ENCODE measurements at regions of chr1 and their contacts with region 1.

Region 1: GRCh38 chr1:36149237-36149972 is at the start of gene TRAPPC3:
- DNase-seq: peak; percentile 99
- H3K4me3 ChIP-seq: peak within 1 kb of the TSS; percentile 75
- H3K27ac ChIP-seq: peak within 1 kb of the TSS; percentile 99
- H3K27me3 ChIP-seq: no peaks in the 10 kb centered on the region
- CTCF ChIP-seq: peak; percentile 94
- polyA plus RNA-seq, gene TRAPPC3: 88.5 and 92.3 TPM in 2 replicates

Region 2: GRCh38 chr1:35915693-35916092 is 233.7 kb before region 1 on chr1:
- CTCF ChIA-PET with region 1: no interaction called
- POLR2A ChIA-PET with region 1: no interaction called
- DNase-seq: no peak
- H3K4me3 ChIP-seq: no peak overlapping the region
- H3K27ac ChIP-seq: no peak overlapping the region
- H3K27me3 ChIP-seq: no peaks in the 10 kb centered on the region
- CTCF ChIP-seq: no peak

Region 3: DNA sequence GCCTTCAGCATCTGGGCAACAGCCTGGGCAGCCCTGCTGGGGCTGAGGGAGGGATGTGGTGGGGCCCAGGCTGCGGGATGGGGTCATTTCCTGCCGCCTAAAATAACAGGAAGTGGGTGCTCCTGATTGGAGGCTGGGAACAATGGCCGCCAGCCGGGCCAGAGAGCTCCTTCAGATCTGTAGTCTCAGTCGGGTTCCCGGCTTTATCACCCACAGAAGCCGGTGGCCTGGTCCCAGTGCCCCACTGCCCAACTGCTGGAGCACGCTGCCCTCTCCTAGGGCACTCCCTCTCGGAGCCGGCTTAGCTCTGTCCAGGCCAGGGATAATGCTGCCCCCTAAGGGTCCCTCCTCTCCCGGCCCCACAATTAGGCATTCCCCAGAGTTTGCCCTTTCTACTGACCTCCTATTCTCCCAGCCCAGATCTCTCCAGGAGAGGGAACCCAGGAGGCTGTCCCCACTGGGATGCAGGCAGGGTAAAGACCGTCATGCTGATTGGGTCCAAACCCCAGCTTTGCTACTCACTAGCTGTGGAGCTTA is 11.6 kb after region 1 on chr1:
- CTCF ChIA-PET with region 1: interaction called, 19 read pairs
- POLR2A ChIA-PET with region 1: interaction called, 12 read pairs
- DNase-seq: no peak
- H3K4me3 ChIP-seq: peak overlapping the region; percentile 66
- H3K27ac ChIP-seq: peak overlapping the region; percentile 78
- H3K27me3 ChIP-seq: no peaks in the 10 kb centered on the region
- CTCF ChIP-seq: peak; percentile 56

Region 4: GRCh38 chr1:36223993-36224536 is 74.7 kb after region 1 on chr1 and contains the start of gene THRAP3:
- CTCF ChIA-PET with region 1: interaction called, 7 read pairs
- POLR2A ChIA-PET with region 1: interaction called, 17 read pairs
- DNase-seq: peak; percentile 98
- H3K4me3 ChIP-seq: peak within 1 kb of the TSS; percentile 97
- H3K27ac ChIP-seq: peak within 1 kb of the TSS; percentile 94
- H3K27me3 ChIP-seq: no peaks in the 10 kb centered on the region
- CTCF ChIP-seq: no peak
- polyA plus RNA-seq, gene THRAP3: 76.0 and 76.5 TPM in 2 replicates

Region 5: GRCh38 chr1:36285448-36286101 is 136.2 kb after region 1 on chr1:
- CTCF ChIA-PET with region 1: interaction called, 62 read pairs
- POLR2A ChIA-PET with region 1: interaction called, 5 read pairs
- DNase-seq: peak; percentile 81
- H3K4me3 ChIP-seq: no peak overlapping the region
- H3K27ac ChIP-seq: no peak overlapping the region
- H3K27me3 ChIP-seq: no peaks in the 10 kb centered on the region
- CTCF ChIP-seq: peak; percentile 74

Region 6: DNA sequence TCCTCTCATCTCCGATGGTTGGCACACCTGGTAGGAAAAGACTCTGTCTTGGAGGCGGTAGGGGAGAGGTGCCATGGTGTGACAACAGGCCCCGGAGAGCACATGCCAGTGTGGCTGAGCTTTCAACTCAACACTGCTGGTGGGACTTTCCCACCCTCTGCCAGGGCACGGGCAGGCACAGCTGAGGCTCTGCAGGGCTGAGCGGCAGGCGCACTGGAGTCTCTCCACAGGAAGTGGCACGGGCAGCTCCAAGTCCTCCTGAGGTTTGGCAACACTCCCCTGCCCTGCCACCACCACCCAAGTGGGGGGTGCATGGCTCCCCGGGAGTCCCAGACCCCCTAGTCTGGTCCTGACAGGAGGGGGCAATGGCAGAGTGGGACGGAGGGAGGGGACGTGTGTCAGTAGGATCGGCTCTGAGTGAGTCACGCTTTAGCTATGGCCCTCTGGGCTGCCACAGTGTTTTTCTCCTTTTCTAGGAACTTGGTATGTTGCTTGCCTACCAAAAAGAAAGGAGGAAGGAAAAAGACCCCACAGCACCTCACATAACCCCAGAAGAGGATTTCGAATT is 201.3 kb after region 1 on chr1:
- CTCF ChIA-PET with region 1: no interaction called
- POLR2A ChIA-PET with region 1: no interaction called
- DNase-seq: no peak
- H3K4me3 ChIP-seq: no peak overlapping the region
- H3K27ac ChIP-seq: peak overlapping the region; percentile 98
- H3K27me3 ChIP-seq: no peaks in the 10 kb centered on the region
- CTCF ChIP-seq: no peak

Region 7: GRCh38 chr1:36385410-36386257 is 236.2 kb after region 1 on chr1 and contains the start of gene STK40:
- CTCF ChIA-PET with region 1: no interaction called
- POLR2A ChIA-PET with region 1: interaction called, 15 read pairs
- DNase-seq: peak; percentile 99
- H3K4me3 ChIP-seq: peak within 1 kb of the TSS; percentile 92
- H3K27ac ChIP-seq: peak within 1 kb of the TSS; percentile 100
- H3K27me3 ChIP-seq: no peaks in the 10 kb centered on the region
- CTCF ChIP-seq: no peak
- polyA plus RNA-seq, gene STK40: 26.4 and 30.3 TPM in 2 replicates

Region 8: DNA sequence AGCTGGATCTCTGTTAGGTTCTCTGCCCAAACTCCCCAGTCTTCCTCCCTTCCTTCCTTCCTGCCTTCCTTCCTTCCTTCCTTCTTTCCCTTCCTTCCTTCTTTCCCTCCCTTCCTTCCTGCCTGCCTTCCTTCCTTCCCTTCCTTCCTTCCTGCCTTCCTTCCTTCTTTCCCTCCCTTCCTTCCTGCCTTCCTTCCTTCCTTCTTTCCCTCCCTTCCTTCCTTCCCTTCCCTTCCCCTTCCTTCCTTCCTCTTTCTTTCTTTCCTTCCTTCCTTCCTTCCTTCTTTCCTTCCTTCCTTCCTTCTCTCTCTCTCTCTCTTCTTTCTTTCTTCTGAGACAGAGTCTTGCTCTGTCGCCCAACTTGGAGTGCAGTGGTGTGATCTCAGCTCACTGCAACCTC is 257.0 kb after region 1 on chr1:
- CTCF ChIA-PET with region 1: no interaction called
- POLR2A ChIA-PET with region 1: no interaction called
- DNase-seq: no peak
- H3K4me3 ChIP-seq: no peak overlapping the region
- H3K27ac ChIP-seq: no peak overlapping the region
- H3K27me3 ChIP-seq: no peaks in the 10 kb centered on the region
- CTCF ChIP-seq: no peak

Region 9: DNA sequence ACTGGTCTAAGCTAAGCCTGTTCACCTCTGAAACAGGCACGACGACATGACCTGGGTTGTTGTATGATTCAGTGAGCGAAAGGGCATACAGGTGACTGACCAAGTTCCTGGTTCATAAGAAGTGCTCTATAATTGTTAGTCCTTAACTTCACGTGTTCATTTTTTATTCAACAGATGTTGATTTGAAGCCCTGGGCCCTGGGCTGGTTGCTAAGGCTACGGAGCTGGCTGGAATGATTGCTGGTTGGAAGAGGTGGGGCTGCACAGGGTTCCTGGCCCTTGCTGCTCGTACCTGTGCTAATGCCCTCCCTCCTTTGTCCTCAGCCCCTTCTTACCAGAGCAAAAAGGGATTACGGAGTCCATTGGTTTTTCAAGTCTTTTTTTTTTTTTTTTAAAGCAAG is 444.6 kb after region 1 on chr1:
- CTCF ChIA-PET with region 1: no interaction called
- POLR2A ChIA-PET with region 1: no interaction called
- DNase-seq: no peak
- H3K4me3 ChIP-seq: no peak overlapping the region
- H3K27ac ChIP-seq: no peak overlapping the region
- H3K27me3 ChIP-seq: peaks cover 5% of the 10 kb centered on the region
- CTCF ChIP-seq: no peak